ENCODE measurements at regions of chr22 and their contacts with region 1.

Region 1: GRCh38 chr22:43036282-43036829 is 21.4 kb upstream of the PACSIN2 start:
- DNase-seq: no peak
- CTCF ChIP-seq: no peak

Region 2: GRCh38 chr22:42649246-42650099 is 386.9 kb before region 1 on chr22 and contains the start of gene CYB5R3:
- in situ Hi-C with region 1: loop called (anchors 25 kb)
- DNase-seq: peak; percentile 97
- CTCF ChIP-seq: no peak

Region 3: GRCh38 chr22:42780070-42780540 is 256.3 kb before region 1 on chr22:
- in situ Hi-C with region 1: loop called (anchors 25 kb)
- DNase-seq: peak; percentile 76
- CTCF ChIP-seq: peak; percentile 67

Region 4: GRCh38 chr22:42863349-42863961 is 172.9 kb before region 1 on chr22:
- in situ Hi-C with region 1: loop called (anchors 10 kb)
- DNase-seq: peak; percentile 50
- CTCF ChIP-seq: no peak